GM10248 (cell line): ENCODE measurements at regions of chr4 and their contacts with region 1.

Region 1: GRCh38 chr4:74320559-74321118 is 12.4 kb downstream of the EPGN start:
- DNase-seq: peak; percentile 36
- CTCF ChIP-seq: peak; percentile 40

Region 2: DNA sequence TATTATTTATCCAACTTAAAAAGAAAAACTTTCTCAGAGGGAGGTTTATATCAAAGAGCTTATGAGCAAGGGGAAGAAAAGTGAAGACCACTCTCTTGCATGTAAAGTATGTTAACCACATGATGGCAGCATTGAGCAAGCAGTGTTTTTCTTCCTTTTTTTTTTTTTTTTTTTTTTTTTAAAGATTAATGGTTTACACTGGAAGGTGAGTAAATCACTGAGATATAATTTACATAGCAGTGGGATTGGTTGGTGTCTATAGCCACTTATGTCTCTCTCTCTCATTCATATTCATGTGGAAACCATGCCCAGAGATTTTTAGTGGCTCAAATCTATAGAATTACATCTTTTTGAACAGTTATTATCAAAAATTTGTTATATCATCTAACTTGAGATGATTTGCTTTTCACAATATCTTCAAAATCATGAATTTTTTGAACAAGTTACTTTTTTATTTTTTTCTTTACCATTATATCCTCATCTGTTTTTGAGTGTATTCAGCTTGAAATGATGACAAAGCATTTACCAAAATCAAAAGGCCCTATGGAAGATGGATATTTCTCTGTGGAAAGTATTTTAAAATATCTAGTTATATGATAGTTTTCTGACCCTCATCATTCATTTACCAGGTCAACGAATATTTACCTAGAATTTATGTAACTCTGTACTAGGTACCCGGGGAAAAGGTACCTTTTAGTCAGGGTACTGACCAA is 131.2 kb before region 1 on chr4:
- CTCF ChIA-PET with region 1: interaction called, 19 read pairs
- POLR2A ChIA-PET with region 1: no interaction called
- DNase-seq: peak; percentile 29
- CTCF ChIP-seq: peak; percentile 60

Region 3: GRCh38 chr4:74335341-74336021 is 14.8 kb after region 1 on chr4:
- CTCF ChIA-PET with region 1: interaction called, 22 read pairs
- POLR2A ChIA-PET with region 1: no interaction called
- DNase-seq: no peak
- CTCF ChIP-seq: no peak

Region 4: DNA sequence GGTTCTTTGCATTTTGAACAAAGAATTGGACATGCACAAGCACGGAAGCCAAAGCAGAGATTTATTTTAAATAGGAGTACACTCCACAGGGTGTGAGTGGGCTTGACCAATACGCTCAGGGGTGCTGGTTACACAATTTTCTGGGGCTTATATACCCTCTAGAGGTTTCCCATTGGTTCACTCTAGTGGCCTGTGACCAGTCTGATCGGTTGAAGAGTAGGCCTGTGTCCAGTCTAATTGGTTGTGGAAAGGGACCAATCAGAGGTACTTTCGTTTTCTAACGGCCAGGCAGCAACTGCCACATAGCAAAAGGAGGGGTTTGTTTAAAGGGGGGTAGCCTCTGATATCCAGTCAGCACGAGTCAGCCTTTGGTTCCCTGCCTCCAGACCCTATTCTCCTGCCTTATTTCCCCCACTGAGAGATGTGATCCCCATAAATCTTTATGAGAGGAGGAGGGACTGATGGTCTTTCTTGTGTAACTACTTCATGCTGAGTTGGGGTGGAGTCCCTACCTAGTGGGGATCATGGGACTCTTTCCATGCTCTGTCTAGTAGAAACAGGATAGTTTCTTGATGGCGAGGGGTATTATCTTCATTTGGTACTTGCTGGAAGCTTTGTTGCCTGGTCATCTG is 113.0 kb after region 1 on chr4:
- CTCF ChIA-PET with region 1: no interaction called
- POLR2A ChIA-PET with region 1: no interaction called
- DNase-seq: no peak
- CTCF ChIP-seq: no peak

Region 5: GRCh38 chr4:74531963-74532794 is 211.5 kb after region 1 on chr4:
- CTCF ChIA-PET with region 1: interaction called, 11 read pairs
- POLR2A ChIA-PET with region 1: no interaction called
- DNase-seq: peak; percentile 10
- CTCF ChIP-seq: peak; percentile 28

Region 6: GRCh38 chr4:74675673-74676279 is 355.1 kb after region 1 on chr4:
- CTCF ChIA-PET with region 1: interaction called, 66 read pairs
- POLR2A ChIA-PET with region 1: no interaction called
- DNase-seq: peak; percentile 18
- CTCF ChIP-seq: peak; percentile 55